K562 (cell line): ENCODE measurements at regions of chr1 and their contacts with region 1.

Region 1: GRCh38 chr1:157948312-157949073 is 45.0 kb upstream of the KIRREL1 start:
- DNase-seq: peak in 1 of 4 experiments; percentile 32
- ATAC-seq: peak; percentile 67
- H3K4me3 ChIP-seq: no peak overlapping the region
- H3K27ac ChIP-seq: no peak overlapping the region
- H3K4me1 ChIP-seq: no peaks in the 10 kb centered on the region
- H3K27me3 ChIP-seq: peaks cover 4 to 5% of the 10 kb centered on the region in 2 experiments; a peak in 4 of 5 replicates
- CTCF ChIP-seq: peak; percentile 48 to 73 (median 51)
- EP300 ChIP-seq: no peak
- POLR2A ChIP-seq: no peak
- RAD21 ChIP-seq: peak; percentile 74 to 82

Region 2: GRCh38 chr1:157580179-157580827 is 368.2 kb before region 1 on chr1:
- CTCF ChIA-PET with region 1: no interaction called
- POLR2A ChIA-PET with region 1: no interaction called
- in situ Hi-C with region 1: no loop called
- intact Hi-C with region 1: loop called (anchors 5 kb)
- DNase-seq: peak; percentile 56 to 65 (median 62)
- ATAC-seq: peak; percentile 84
- H3K4me3 ChIP-seq: no peak overlapping the region
- H3K27ac ChIP-seq: no peak overlapping the region
- H3K4me1 ChIP-seq: no peaks in the 10 kb centered on the region
- H3K27me3 ChIP-seq: peaks cover 0 to 5% of the 10 kb centered on the region in 2 experiments; a peak in 2 of 5 replicates
- CTCF ChIP-seq: peak; percentile 58 to 80 (median 69)
- EP300 ChIP-seq: no peak
- POLR2A ChIP-seq: no peak
- RAD21 ChIP-seq: peak in 1 of 2 experiments; percentile 67

Region 3: DNA sequence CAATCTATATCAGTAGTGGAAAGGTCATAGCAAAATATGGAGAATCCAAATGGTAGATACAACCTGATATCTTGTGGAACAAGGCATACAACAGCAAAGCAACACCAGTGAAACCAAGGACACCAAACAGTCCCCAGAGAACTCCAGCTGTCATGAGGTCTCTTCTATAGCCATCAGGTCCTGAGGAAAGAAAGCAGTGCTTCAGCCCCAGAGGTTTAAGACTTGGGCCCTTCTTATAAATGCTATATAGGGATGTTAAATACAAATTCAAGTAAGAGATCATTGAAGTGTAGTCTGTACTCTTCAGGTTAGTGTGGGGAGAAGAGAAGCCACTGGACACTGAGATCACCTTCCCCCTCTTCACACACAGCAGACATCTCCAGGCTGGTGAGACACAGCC is 181.7 kb before region 1 on chr1:
- CTCF ChIA-PET with region 1: no interaction called
- POLR2A ChIA-PET with region 1: no interaction called
- in situ Hi-C with region 1: no loop called
- intact Hi-C with region 1: loop called (anchors 10 kb)
- DNase-seq: no peak
- ATAC-seq: no peak
- H3K4me3 ChIP-seq: no peak overlapping the region
- H3K27ac ChIP-seq: no peak overlapping the region
- H3K4me1 ChIP-seq: no peaks in the 10 kb centered on the region
- H3K27me3 ChIP-seq: no peaks in the 10 kb centered on the region; a peak in 1 of 5 replicates
- CTCF ChIP-seq: no peak
- EP300 ChIP-seq: no peak
- POLR2A ChIP-seq: no peak
- RAD21 ChIP-seq: no peak

Region 4: GRCh38 chr1:157878059-157878458 is 70.4 kb before region 1 on chr1:
- CTCF ChIA-PET with region 1: interaction called, 10 read pairs
- POLR2A ChIA-PET with region 1: no interaction called
- in situ Hi-C with region 1: no loop called
- intact Hi-C with region 1: loop called (anchors 1 kb)
- DNase-seq: peak in 3 of 4 experiments; percentile 8 to 11 (median 11)
- ATAC-seq: peak; percentile 68; the same call in 2 of the 3 replicates
- H3K4me3 ChIP-seq: no peak overlapping the region
- H3K27ac ChIP-seq: no peak overlapping the region
- H3K4me1 ChIP-seq: no peaks in the 10 kb centered on the region
- H3K27me3 ChIP-seq: no peaks in the 10 kb centered on the region
- CTCF ChIP-seq: peak; percentile 15 to 47 (median 41); a peak in 4 of 6 replicates
- EP300 ChIP-seq: no peak
- POLR2A ChIP-seq: no peak
- RAD21 ChIP-seq: peak; percentile 59 to 64